Dorsolateral prefrontal cortex (tissue), 120 donors: ENCODE measurements at regions of chr20 and their contacts with region 1.

Region 1: DNA sequence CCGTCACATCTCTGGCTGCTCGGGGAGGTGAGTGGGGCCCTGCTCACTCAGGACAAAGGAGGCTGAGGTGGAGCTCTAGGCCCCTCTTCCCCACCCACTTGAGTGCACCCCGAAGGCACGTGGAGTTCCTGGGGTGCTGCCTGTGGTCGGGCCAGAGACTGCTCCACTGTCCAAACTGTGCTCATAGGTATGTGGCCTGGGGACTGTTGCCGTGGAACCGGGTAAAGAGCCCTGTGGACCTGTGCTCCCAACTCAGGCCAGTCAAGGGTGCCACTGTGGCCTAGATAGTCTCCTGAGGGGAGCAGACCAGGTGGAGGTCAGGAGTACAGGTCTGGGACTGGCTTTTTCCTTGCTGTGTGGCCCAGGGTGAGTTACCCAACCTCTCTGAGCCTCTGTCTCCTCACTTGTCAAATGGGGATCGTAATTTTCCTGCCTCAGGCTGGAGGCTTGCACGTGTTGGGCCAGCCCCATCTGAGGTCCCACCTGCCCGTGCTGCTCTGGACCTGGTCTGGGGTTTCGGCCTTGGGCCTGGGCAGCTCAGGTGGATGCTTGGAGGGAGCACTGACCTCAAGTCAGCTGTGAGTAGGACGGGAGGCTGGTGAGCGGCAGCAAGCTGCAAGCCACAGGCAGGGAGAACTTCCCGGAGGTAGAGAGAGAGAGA is 12.4 kb upstream of the NPBWR2 start:
- DNase-seq: peak in 4 of 10 donors; percentile 22 to 41 (median 38)
- H3K4me3 ChIP-seq: peak overlapping the region in 32 of 59 donors; percentile 10 to 58 (median 37)
- H3K27ac ChIP-seq: peak overlapping the region in 1 of 59 donors; percentile 57
- H3K27me3 ChIP-seq: peaks cover 0 to 12% (median 0%) of the 10 kb centered on the region in 45 donors
- CTCF ChIP-seq: no peak

Region 2: DNA sequence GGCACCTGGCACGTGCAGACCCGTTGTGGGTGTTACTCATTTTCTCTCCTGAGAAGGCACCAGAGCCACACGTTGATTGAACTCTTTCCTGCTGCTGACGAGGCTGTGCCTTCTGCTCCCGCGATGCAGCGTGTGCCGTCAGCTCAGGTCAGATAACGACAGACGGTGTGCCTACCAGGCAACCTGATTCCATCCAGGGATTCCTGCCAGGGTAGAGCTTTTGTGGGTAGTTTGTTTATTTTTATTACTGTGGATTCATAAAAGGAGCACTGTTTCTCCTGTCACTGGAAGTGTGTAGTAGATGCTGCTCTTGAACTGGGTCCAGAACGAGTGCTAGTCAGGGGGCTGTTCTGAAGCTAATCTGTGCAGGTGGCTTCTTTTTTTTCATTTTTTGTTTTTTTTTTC is 118.2 kb before region 1 on chr20:
- intact Hi-C with region 1: no loop called
- DNase-seq: peak in 2 of 10 donors; percentile 9 to 91
- H3K4me3 ChIP-seq: no peak overlapping the region
- H3K27ac ChIP-seq: peak overlapping the region in 1 of 59 donors; percentile 86
- H3K27me3 ChIP-seq: no peaks in the 10 kb centered on the region
- CTCF ChIP-seq: no peak

Region 3: DNA sequence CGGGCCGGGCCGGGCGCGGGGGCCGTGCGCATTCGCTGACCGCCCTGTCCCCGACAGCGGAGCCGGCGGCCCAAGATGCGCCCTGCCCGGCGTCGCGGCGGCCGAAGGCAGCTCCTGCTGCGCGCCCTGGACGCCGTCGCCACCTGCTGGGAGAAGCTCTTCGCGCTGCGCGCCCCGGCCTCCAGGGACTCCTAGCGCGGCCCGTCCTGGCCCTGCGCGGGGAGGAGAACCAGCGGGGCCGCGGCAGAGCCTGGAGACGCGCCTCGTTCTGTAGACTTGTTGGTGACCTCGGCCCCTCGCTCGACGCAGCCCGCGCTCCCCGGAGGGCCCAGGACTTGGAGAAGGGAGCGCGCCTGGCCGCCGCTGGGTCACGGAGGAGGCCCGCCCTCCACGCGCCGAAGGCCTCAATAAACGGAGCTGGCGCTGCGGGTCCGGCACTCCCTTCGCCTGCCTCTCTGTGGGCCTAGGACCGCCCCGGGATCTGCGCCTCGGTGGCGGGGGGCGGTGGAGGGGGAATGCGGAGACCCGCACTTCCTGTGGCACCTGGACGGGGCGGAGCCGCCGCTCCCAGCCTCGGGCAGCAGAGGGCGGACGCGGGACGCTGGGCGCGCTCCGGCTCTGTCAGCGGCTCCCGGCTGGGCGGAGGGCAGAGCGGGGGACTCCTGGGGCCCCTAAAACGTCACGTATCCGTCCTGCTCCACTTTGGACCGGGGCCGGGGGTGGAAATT is 81.1 kb before region 1 on chr20:
- intact Hi-C with region 1: loop called in 1 of 2 experiments (anchors 10 kb)
- DNase-seq: peak in 3 of 10 donors; percentile 20 to 76 (median 66)
- H3K4me3 ChIP-seq: peak overlapping the region in 57 of 59 donors; percentile 14 to 63 (median 42)
- H3K27ac ChIP-seq: peak overlapping the region in 7 of 59 donors; percentile 26 to 87 (median 53)
- H3K27me3 ChIP-seq: peaks cover 0 to 78% (median 58%) of the 10 kb centered on the region in 45 donors
- CTCF ChIP-seq: peak in 52 of 56 donors; percentile 32 to 75 (median 56)

Region 4: GRCh38 chr20:64083378-64083803 is 36.4 kb before region 1 on chr20:
- intact Hi-C with region 1: loop called (anchors 1 to 2 kb)
- DNase-seq: peak in 8 of 10 donors; percentile 63 to 89 (median 79)
- H3K4me3 ChIP-seq: peak overlapping the region; percentile 36 to 76 (median 64)
- H3K27ac ChIP-seq: peak overlapping the region in 34 of 59 donors; percentile 24 to 85 (median 56)
- H3K27me3 ChIP-seq: peaks cover 0 to 20% (median 0%) of the 10 kb centered on the region in 45 donors
- CTCF ChIP-seq: peak; percentile 37 to 88 (median 72)

Region 5: DNA sequence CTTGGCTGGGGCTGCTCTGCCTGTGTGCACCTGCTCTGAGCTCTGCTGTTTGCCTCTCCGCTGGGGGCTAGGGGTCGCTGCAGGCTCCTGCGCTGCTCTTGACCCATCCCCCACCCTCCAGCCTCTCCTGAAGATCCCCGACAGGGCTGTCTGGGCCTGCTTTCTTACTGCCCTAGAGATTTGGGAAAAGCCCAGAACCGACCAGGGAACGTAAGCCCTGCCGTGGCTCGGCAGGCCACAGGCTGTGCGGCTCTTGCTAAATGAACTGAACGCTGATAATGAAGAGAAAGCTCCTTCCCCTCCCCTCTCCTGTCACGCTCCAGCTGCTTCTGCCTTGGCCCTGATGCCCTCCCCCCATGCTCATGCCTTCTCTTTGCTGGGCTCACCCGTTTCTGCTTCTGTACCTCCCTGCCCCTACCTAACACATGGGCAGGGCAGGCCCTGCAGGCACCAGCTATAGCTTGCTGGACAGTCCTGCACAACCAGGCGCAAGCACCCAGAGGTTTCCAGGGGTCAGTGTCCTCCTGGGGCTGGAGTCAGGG is 103.8 kb after region 1 on chr20:
- intact Hi-C with region 1: no loop called
- DNase-seq: peak in 2 of 10 donors; percentile 17 to 40
- H3K4me3 ChIP-seq: no peak overlapping the region
- H3K27ac ChIP-seq: peak overlapping the region in 9 of 59 donors; percentile 10 to 47 (median 28)
- H3K27me3 ChIP-seq: peaks cover 0 to 4% (median 0%) of the 10 kb centered on the region in 45 donors
- CTCF ChIP-seq: peak in 20 of 56 donors; percentile 10 to 42 (median 27)